ENCODE measurements at regions of chr4 and their contacts with region 1.

Region 1: GRCh38 chr4:39527273-39528060 is at the start of gene UGDH:
- DNase-seq: peak; percentile 94 to 96
- ATAC-seq: peak; percentile 92 to 94
- H3K4me3 ChIP-seq: peak within 1 kb of the TSS; percentile 84 to 95 (median 91)
- H3K27ac ChIP-seq: peak within 1 kb of the TSS; percentile 91 to 98 (median 95)
- H3K4me1 ChIP-seq: peaks cover 24% of the 10 kb centered on the region in 2 donors
- H3K27me3 ChIP-seq: no peaks in the 10 kb centered on the region
- CTCF ChIP-seq: no peak
- POLR2A ChIP-seq: peak; percentile 88 to 89
- total RNA-seq, gene UGDH: 6.1 to 12.7 (median 8.8) TPM

Region 2: DNA sequence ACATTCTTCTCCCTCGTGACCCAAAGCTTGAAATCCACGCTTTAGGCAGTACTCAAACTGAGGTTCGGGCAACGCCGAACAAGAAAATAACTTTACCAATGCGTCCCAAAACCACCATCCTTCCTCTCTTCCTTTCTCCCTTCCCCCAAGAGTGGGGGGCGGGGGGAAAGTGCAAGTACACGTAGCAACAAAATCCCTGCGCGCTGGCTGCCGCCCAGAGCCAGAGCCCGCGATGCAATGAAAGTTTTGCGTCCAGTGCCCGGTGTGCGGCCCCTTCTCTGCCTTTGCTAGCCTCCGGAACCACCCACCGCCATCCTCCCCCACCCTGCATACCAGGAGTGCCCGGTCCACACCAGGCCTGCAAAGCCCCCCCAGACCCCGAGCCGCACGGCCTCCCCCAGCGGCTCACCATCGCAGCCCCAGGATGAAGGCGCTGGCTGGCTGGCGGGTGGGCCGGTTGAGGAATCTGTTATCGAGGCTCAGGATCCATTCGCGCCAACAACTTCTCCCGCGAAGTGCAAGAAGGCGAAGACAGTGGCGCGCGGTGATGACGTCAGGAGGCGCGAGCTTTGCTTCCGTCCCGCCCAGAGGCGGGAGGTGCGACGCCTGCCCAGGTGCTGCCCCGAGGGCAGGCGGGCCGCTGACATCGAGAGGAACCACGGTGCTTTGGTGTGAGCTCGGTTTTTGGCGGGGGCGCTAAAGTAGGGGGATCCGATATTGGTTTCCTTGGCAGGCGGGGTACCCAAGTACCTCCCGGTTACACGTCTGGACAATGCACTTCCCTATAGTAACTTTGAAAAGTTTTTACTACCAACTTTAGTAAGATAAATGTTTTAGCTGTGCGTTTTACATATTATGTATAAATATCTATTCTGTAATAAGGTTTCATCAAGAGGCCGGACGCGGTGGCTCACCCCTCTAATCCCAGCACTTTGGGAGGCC is 161.4 kb before region 1 on chr4 and contains the start of gene RFC1:
- in situ Hi-C with region 1: no loop called
- intact Hi-C with region 1: loop called (anchors 10 kb)
- DNase-seq: peak; percentile 72 to 84
- ATAC-seq: peak; percentile 91 to 97
- H3K4me3 ChIP-seq: peak within 1 kb of the TSS; percentile 87 to 97 (median 92)
- H3K27ac ChIP-seq: peak within 1 kb of the TSS; percentile 73 to 79 (median 78)
- H3K4me1 ChIP-seq: peaks cover 10 to 16% of the 10 kb centered on the region in 2 donors
- H3K27me3 ChIP-seq: no peaks in the 10 kb centered on the region
- CTCF ChIP-seq: no peak
- POLR2A ChIP-seq: peak in 1 of 2 donors; percentile 13
- total RNA-seq, gene RFC1: 13.9 to 47.9 (median 21.6) TPM

Region 3: DNA sequence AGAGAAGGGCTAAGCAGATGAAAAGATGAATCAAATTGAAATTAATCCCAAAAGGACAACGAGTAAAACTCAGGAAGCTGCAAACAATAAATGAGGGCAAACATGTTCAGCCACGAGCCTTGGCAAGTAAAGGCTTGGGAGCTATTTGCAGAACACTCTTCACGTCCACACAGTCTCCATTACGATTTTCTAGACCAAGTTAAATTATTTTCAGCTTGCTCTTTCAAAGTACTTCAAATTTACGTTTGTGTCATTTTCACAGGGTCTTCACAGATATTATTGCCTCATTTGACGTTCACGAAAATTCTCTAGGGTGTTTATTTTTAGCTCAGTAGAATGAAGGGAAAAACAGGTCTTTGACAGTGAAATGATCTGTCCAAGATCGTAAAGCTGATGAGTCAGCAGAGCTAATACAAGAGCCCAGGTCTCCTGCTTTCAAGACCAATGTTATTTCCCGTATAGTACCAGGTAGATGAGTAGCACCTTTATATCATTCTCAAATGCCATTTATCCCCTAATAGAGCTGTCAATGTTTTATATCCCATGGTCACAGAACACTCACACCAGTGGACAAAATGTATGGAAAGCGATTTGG is 99.8 kb before region 1 on chr4:
- in situ Hi-C with region 1: no loop called
- intact Hi-C with region 1: no loop called
- DNase-seq: no peak
- ATAC-seq: no peak
- H3K4me3 ChIP-seq: no peak overlapping the region
- H3K27ac ChIP-seq: no peak overlapping the region
- H3K4me1 ChIP-seq: no peaks in the 10 kb centered on the region
- H3K27me3 ChIP-seq: no peaks in the 10 kb centered on the region
- CTCF ChIP-seq: no peak
- POLR2A ChIP-seq: no peak

Region 4: GRCh38 chr4:39682138-39682537 is 154.7 kb after region 1 on chr4:
- in situ Hi-C with region 1: no loop called
- intact Hi-C with region 1: no loop called
- DNase-seq: no peak
- ATAC-seq: no peak
- H3K4me3 ChIP-seq: no peak overlapping the region
- H3K27ac ChIP-seq: no peak overlapping the region
- H3K4me1 ChIP-seq: no peaks in the 10 kb centered on the region
- H3K27me3 ChIP-seq: no peaks in the 10 kb centered on the region
- CTCF ChIP-seq: no peak
- POLR2A ChIP-seq: no peak

Measured in gastrocnemius medialis (tissue), 4 donors.